ENCODE measurements at regions of chr6 and their contacts with region 1.

Region 1: GRCh38 chr6:121305957-121306607 is 28.2 kb downstream of the TBC1D32 start:
- DNase-seq: no peak
- ATAC-seq: peak; percentile 81
- H3K4me3 ChIP-seq: no peak overlapping the region
- H3K27ac ChIP-seq: no peak overlapping the region
- H3K4me1 ChIP-seq: no peaks in the 10 kb centered on the region
- H3K27me3 ChIP-seq: no peaks in the 10 kb centered on the region
- CTCF ChIP-seq: peak; percentile 60 to 66 (median 62); a peak in 5 of 6 replicates
- EP300 ChIP-seq: no peak
- POLR2A ChIP-seq: no peak
- RAD21 ChIP-seq: peak; percentile 88

Region 2: DNA sequence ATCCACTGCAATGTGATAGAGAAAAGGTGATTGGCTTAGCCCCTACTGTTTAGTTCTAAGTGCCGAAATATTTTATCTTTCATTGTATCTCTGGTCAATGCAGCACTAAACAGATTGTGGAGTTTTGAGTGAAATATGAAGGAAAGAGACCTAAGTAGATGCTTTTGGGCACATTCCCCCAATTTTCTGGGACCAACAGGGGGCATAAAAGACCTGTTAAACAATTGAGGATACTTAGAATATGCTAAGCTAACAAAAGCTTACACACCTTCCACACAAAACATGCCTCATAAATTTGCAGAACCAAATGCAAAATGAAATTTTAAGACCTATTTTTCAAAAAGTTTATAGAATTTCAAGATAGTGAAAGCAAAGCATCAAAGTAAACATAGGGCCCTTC is 718.7 kb before region 1 on chr6:
- CTCF ChIA-PET with region 1: interaction called, 3 read pairs
- POLR2A ChIA-PET with region 1: no interaction called
- RAD21 ChIA-PET with region 1: no interaction called
- SMC1A ChIA-PET with region 1: no interaction called
- in situ Hi-C with region 1: no loop called
- intact Hi-C with region 1: loop called (anchors 5 kb)
- DNase-seq: no peak
- ATAC-seq: no peak
- H3K4me3 ChIP-seq: no peak overlapping the region
- H3K27ac ChIP-seq: no peak overlapping the region
- H3K4me1 ChIP-seq: no peaks in the 10 kb centered on the region
- H3K27me3 ChIP-seq: no peaks in the 10 kb centered on the region
- CTCF ChIP-seq: no peak; a peak in 1 of 6 replicates
- EP300 ChIP-seq: no peak
- POLR2A ChIP-seq: no peak
- RAD21 ChIP-seq: no peak

Region 3: DNA sequence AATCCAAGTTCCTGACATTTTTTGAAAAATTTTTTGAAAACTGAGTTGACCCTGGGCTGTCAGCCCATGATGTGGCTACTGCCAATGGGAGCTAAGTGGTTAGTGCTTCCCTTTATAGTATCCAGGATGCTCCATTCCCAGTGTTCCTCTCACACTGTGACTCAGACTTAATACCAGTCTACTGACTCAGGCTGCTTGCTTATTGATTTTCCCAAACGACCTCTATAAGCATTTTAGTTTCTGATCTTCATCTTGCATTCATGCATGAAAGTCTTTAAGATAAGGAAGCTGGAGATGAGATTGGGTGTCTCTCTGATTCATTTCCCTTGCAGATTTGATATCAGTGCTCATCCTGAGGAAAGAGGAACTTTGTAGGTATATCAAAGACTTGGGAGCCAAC is 531.8 kb before region 1 on chr6:
- CTCF ChIA-PET with region 1: no interaction called
- POLR2A ChIA-PET with region 1: no interaction called
- RAD21 ChIA-PET with region 1: no interaction called
- SMC1A ChIA-PET with region 1: no interaction called
- in situ Hi-C with region 1: no loop called
- intact Hi-C with region 1: loop called (anchors 10 kb)
- DNase-seq: no peak
- ATAC-seq: no peak
- H3K4me3 ChIP-seq: no peak overlapping the region
- H3K27ac ChIP-seq: no peak overlapping the region
- H3K4me1 ChIP-seq: no peaks in the 10 kb centered on the region
- H3K27me3 ChIP-seq: no peaks in the 10 kb centered on the region
- CTCF ChIP-seq: no peak
- EP300 ChIP-seq: no peak
- POLR2A ChIP-seq: no peak
- RAD21 ChIP-seq: no peak

Region 4: GRCh38 chr6:121086876-121087275 is 219.2 kb before region 1 on chr6:
- CTCF ChIA-PET with region 1: no interaction called
- POLR2A ChIA-PET with region 1: no interaction called
- RAD21 ChIA-PET with region 1: no interaction called
- SMC1A ChIA-PET with region 1: no interaction called
- in situ Hi-C with region 1: no loop called
- intact Hi-C with region 1: no loop called
- DNase-seq: no peak
- ATAC-seq: no peak
- H3K4me3 ChIP-seq: no peak overlapping the region
- H3K27ac ChIP-seq: no peak overlapping the region
- H3K4me1 ChIP-seq: no peaks in the 10 kb centered on the region
- H3K27me3 ChIP-seq: no peaks in the 10 kb centered on the region
- CTCF ChIP-seq: no peak
- EP300 ChIP-seq: no peak
- POLR2A ChIP-seq: no peak
- RAD21 ChIP-seq: no peak

Region 5: GRCh38 chr6:121319112-121319553 is 13.1 kb after region 1 on chr6:
- CTCF ChIA-PET with region 1: interaction called, 13 read pairs
- POLR2A ChIA-PET with region 1: no interaction called
- RAD21 ChIA-PET with region 1: interaction called, 4 read pairs
- SMC1A ChIA-PET with region 1: interaction called, 21 read pairs
- in situ Hi-C with region 1: no loop called
- intact Hi-C with region 1: no loop called
- DNase-seq: no peak
- ATAC-seq: peak; percentile 84
- H3K4me3 ChIP-seq: no peak overlapping the region
- H3K27ac ChIP-seq: no peak overlapping the region
- H3K4me1 ChIP-seq: no peaks in the 10 kb centered on the region
- H3K27me3 ChIP-seq: no peaks in the 10 kb centered on the region
- CTCF ChIP-seq: peak; percentile 25 to 41 (median 37); a peak in 2 of 6 replicates
- EP300 ChIP-seq: no peak
- POLR2A ChIP-seq: no peak
- RAD21 ChIP-seq: no peak